GM10248 (cell line): ENCODE measurements at regions of chr1 and their contacts with region 1.

Region 1: DNA sequence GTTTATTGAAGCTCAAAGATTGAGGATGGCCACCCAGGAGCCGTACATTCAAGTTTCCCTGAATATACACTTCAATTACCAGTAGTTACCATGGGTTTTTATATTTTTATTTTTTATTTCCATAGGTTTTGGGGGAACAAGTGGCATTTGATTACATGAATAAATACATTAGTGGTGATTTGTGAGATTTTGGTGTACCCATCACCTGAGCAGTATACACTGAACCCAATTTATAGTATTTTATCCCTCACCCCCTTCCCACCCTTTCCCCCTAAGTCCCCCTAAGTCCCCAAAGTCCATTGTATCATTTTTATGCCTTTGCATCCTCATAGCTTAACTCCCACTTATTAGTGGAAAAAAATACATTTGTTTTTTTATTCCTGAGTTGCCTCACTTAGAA is 791.4 kb downstream of the BRINP3 start:
- DNase-seq: no peak
- CTCF ChIP-seq: no peak

Region 2: DNA sequence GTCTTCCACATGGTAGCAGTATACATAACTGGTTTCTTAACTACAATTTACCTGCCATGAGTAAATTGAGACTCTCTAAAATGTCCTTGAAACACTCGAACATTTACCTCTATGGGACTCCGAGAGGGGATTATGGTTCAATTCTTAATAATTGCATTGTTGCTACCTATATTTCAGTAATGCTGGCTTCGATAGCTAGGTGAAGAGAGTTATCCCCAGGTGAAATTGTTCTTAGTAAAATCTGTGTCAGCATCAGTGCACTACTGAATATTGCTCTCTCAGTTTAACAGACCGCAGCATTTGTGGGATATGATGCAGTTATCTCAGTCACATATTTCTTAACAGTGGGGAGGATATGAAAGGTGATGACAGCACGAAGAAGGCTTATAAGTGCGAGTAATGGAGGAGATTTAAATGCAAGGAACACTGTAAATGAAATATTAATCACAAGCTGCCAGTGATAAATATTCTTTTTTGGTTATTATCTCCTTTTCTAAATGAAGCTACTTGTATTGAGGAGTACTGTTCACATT is 10.5 kb before region 1 on chr1:
- CTCF ChIA-PET with region 1: interaction called, 11 read pairs
- POLR2A ChIA-PET with region 1: no interaction called
- DNase-seq: no peak
- CTCF ChIP-seq: no peak